ENCODE measurements at regions of chr4 and their contacts with region 1.

Region 1: GRCh38 chr4:112266821-112267220 is 18.9 kb downstream of the TIFA start:
- DNase-seq: no peak
- H3K4me3 Mint-ChIP-seq: no peak overlapping the region
- H3K27ac Mint-ChIP-seq: peak overlapping the region; percentile 71
- H3K4me1 Mint-ChIP-seq: peaks cover 33% of the 10 kb centered on the region
- H3K27me3 Mint-ChIP-seq: no peaks in the 10 kb centered on the region

Region 2: DNA sequence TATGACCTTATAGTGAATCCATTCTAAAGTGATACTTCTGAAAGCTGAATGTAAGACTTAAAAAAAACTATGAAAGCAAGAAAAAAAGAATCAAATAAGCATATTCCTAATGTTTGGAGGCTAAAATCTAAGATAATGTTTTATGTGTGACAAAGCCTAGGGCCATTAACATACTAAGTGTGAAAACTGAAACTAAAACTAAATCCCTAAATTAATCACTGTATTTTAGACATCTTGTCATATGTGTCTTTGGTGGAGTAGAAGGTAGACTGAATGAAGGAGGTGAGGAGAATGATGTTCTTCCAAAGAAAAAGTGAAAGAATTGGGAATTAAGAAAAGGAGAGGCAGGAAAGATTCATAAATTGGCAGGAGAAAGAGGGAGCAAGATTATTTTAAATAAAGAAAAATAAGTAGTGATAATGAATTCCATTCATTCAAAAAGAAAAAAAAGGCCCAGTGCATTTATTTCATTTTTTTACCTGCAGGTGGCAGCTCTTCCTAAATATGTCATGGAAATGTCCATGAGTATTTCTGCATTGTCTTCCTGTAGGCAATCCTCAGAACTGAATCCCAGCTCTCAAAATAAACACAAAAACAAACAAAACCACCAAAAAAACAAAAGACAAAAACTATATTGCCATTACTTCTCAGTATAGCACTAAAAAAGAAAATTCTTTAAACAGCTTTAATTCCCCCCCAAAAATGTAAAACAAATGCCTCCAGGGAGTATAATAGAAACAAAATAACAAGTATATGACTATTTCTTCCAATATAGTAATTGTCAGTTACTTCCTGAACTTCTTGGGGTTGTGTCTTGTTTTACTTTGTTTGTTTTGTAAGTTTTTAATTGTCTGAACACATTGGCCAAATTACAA is 52.2 kb before region 1 on chr4:
- CTCF ChIA-PET with region 1: interaction called, 4 read pairs
- intact Hi-C with region 1: loop called (anchors 1 kb)
- DNase-seq: no peak
- H3K4me3 Mint-ChIP-seq: no peak overlapping the region
- H3K27ac Mint-ChIP-seq: no peak overlapping the region
- H3K4me1 Mint-ChIP-seq: peaks cover 14% of the 10 kb centered on the region
- H3K27me3 Mint-ChIP-seq: no peaks in the 10 kb centered on the region